ENCODE measurements at regions of chr19 and their contacts with region 1.

Region 1: DNA sequence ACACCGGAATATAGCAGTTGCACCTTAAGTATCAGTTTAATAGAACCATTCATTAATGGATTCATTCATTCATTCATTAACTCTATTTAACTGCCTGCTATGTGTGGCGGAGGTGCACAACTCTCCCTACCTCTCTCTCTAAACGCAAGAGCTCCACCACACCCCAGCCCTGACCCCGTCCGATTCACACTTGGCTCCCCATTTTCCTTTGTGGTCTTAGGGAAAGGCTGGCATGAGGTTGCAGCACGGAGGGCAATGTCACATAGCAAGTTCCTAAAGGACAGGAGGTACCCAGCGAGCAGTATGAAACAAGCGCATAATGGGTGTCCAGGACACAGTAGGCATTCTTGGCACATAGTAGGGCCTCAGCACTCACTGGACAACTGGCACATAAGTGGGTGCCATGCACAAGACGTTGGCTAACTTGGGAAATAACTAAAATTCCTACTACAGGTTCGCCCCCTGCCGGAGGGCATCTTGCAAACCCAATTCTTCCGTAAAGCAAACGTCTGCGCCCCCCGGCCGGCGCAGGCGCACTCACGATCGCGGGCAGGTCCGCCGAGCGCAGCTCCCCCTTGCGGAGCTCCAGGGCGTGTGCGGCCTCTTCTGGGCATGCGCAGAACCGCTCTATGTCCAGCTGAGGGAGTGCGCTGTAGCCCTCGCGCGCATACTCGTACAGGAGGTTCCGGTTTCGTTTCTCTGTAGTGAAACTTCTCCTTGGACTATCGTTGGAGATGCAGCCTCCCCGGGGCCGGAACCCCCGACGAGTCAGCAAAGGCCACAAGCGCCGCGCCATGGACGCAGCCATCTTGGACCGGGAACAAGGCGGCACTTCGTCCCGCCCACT is at the start of gene SARS2:
- DNase-seq: peak; percentile 93
- H3K4me3 Mint-ChIP-seq: peak within 1 kb of the TSS; percentile 85
- H3K27ac Mint-ChIP-seq: peak within 1 kb of the TSS; percentile 95
- H3K4me1 Mint-ChIP-seq: peaks cover 14% of the 10 kb centered on the region
- H3K27me3 Mint-ChIP-seq: no peaks in the 10 kb centered on the region
- CTCF ChIP-seq: peak; percentile 95
- total RNA-seq, gene SARS2: 9.3 and 23.6 TPM in 2 replicates

Region 2: DNA sequence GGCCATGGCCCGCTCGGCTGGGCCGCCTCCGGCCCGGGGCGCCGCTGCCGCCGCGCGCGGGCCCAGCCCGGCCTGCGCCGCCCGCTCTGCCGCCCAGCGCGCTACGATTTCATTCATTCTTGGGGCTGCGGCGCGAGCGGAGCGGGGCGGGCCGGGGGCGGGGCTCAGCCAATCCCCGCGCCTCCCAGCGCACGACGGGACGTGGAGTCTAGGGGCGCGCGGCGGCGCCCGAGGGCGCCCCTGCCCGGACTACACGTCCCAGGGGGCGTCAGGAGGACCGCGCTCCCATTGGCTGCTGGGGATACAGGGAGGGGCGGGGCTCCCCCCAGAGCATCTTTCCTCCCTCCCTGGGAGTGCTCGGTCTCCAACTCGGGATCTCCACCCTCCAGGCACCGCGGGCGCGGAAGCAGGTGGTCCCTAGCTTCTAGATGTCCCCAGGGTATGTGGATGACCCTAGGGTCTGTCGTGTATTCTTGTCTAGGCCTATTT is 700.5 kb before region 1 on chr19:
- CTCF ChIA-PET with region 1: interaction called, 3 read pairs
- POLR2A ChIA-PET with region 1: no interaction called
- intact Hi-C with region 1: loop called (anchors 10 kb)
- DNase-seq: peak; percentile 59
- H3K4me3 Mint-ChIP-seq: no peak overlapping the region
- H3K27ac Mint-ChIP-seq: no peak overlapping the region
- H3K4me1 Mint-ChIP-seq: peaks cover 13% of the 10 kb centered on the region
- H3K27me3 Mint-ChIP-seq: peaks cover 47% of the 10 kb centered on the region
- CTCF ChIP-seq: no peak

Region 3: GRCh38 chr19:38634757-38635482 is 295.2 kb before region 1 on chr19:
- CTCF ChIA-PET with region 1: interaction called, 3 read pairs
- POLR2A ChIA-PET with region 1: interaction called, 3 read pairs
- intact Hi-C with region 1: loop called (anchors 1 kb)
- DNase-seq: peak; percentile 80
- H3K4me3 Mint-ChIP-seq: no peak overlapping the region
- H3K27ac Mint-ChIP-seq: peak overlapping the region; percentile 24
- H3K4me1 Mint-ChIP-seq: peaks cover 17% of the 10 kb centered on the region
- H3K27me3 Mint-ChIP-seq: no peaks in the 10 kb centered on the region
- CTCF ChIP-seq: peak; percentile 91

Region 4: DNA sequence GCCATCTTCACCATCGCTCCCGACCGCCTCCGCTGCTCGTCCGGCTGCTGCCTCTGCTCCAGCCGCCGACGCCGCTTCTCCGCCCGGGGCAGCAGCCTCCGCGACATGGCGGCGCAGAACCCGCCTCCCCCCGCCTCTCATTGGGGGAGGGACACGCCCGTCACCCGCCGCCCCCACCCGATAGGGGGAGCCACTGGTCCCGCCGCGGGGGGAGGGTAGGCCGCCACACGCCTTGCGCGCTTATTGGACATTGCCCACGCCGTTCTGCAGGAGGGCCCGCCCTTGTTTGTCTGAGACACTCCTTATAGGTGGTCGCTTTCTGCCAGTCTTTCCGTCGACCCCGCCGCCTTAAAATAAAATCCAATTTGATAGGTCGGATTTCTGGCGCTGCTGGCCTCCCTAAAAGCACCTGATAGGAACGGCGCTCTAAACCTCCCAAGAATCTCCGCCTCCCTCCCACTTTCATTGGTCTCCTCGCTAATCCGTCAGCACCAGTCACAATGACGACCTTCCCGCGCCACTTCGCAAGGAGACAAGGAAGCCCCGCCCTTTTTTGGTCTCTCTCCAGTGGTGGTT is 80.2 kb before region 1 on chr19 and contains the start of gene HNRNPL:
- CTCF ChIA-PET with region 1: interaction called, 5 read pairs
- POLR2A ChIA-PET with region 1: interaction called, 31 read pairs
- intact Hi-C with region 1: loop called (anchors 2 kb)
- DNase-seq: peak; percentile 100
- H3K4me3 Mint-ChIP-seq: peak within 1 kb of the TSS; percentile 97
- H3K27ac Mint-ChIP-seq: peak within 1 kb of the TSS; percentile 99
- H3K4me1 Mint-ChIP-seq: peaks cover 18% of the 10 kb centered on the region
- H3K27me3 Mint-ChIP-seq: no peaks in the 10 kb centered on the region
- CTCF ChIP-seq: no peak
- total RNA-seq, gene HNRNPL: 288 and 421 TPM in 2 replicates

Region 5: GRCh38 chr19:38917516-38918491 is 12.3 kb before region 1 on chr19:
- CTCF ChIA-PET with region 1: interaction called, 16 read pairs
- POLR2A ChIA-PET with region 1: interaction called, 5 read pairs
- intact Hi-C with region 1: no loop called
- DNase-seq: peak; percentile 27
- H3K4me3 Mint-ChIP-seq: no peak overlapping the region
- H3K27ac Mint-ChIP-seq: no peak overlapping the region
- H3K4me1 Mint-ChIP-seq: no peaks in the 10 kb centered on the region
- H3K27me3 Mint-ChIP-seq: no peaks in the 10 kb centered on the region
- CTCF ChIP-seq: peak; percentile 13

Region 6: GRCh38 chr19:39070888-39071287 is 140.7 kb after region 1 on chr19:
- CTCF ChIA-PET with region 1: no interaction called
- POLR2A ChIA-PET with region 1: no interaction called
- intact Hi-C with region 1: no loop called
- DNase-seq: no peak
- H3K4me3 Mint-ChIP-seq: no peak overlapping the region
- H3K27ac Mint-ChIP-seq: no peak overlapping the region
- H3K4me1 Mint-ChIP-seq: peaks cover 9% of the 10 kb centered on the region
- H3K27me3 Mint-ChIP-seq: no peaks in the 10 kb centered on the region
- CTCF ChIP-seq: no peak

Measured in MCF 10A (cell line).